ENCODE measurements at regions of chr9 and their contacts with region 1.

Region 1: GRCh38 chr9:126500684-126501382 is 112.9 kb upstream of the LMX1B start:
- DNase-seq: peak; percentile 91
- ATAC-seq: peak; percentile 75

Region 2: GRCh38 chr9:126558051-126558665 is 57.3 kb after region 1 on chr9:
- intact Hi-C with region 1: loop called (anchors 1 kb)
- DNase-seq: no peak
- ATAC-seq: peak; percentile 67

Region 3: DNA sequence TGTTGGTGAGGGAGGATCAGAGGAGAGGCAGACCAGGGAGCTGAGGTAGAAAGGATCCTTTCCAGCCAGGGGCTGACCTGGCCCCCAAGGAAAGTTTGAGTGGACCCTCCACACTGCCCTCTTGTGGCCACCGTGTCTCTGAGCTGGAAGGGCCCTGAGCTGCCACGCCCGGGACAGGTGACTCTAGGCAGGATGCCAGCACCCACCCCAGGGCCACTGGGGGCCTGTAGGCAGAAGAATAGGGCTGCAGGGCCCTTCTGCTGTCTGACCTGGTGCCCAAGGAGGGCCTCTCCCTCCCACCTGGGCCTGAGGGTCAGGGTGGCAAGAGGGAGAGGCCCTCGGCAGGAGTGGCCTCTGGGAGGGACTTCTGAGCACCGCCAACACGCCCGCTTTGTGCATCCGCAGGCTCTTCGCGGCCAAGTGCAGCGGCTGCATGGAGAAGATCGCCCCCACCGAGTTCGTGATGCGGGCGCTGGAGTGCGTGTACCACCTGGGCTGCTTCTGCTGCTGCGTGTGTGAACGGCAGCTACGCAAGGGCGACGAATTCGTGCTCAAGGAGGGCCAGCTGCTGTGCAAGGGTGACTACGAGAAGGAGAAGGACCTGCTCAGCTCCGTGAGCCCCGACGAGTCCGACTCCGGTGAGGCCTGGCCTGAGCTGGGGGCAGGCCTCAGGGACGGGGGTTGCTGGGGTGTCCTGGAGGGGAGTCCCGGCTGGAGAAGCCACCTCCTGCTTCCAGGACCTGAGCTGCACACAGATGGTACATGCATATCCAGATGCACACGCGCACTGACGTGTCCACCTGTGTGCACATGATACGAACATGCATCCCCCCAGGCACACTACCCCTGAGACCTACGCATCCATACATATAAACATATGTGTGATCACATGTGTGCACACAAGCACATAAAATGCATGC is 189.9 kb after region 1 on chr9:
- intact Hi-C with region 1: loop called (anchors 5 kb)
- DNase-seq: no peak
- ATAC-seq: peak; percentile 64

Measured in Right ventricle myocardium inferior (tissue), 1 donor.